ENCODE measurements at regions of chr18 and their contacts with region 1.

Region 1: DNA sequence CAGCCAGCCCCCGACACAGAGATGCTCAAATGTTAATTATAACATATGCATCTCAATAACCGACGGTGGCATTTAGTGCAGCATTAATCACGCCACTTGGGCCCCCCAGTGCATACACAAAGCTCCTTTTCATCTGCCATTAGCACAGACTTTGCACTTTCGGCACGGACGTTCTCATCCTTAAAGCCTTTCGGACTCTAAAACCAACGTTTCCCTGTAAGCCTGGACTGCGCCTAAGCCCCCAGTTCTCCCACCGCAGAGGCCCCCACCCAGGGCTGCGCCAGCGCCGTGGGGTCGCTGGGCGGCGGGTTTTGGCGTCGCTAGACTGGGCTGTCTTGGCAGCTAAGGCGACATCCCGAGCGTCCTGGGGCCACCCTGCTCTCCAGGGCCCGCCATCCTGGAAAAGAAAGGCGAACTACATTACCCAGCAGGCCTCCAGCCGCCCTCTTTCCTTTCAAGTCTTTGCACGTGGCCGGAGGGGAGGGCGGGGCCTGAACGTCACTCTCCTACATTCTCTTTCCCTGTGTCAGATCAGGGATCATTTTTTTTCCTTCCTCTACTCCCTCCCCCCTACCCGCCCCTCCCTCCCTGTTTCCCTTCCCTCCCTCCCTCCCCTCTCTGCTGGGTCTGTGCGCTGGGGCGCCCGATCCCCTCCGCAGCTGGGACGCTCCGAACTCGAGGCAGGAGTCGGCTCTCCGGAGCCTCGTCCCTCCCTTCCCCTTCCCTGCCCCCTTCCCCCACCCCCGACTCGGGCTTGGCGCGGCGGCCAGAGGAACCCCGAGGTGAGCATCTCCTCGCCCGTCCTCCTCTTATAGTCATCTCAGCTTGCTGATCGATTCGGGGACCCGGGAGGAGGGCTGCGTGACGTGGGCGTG is at the start of gene CTIF:
- DNase-seq: peak in 8 of 9 experiments; percentile 30 to 72 (median 57)
- ATAC-seq: peak; percentile 66
- H3K4me3 ChIP-seq: peak within 1 kb of the TSS; percentile 63 to 77
- H3K4me3 Mint-ChIP-seq: peak within 1 kb of the TSS; percentile 86
- H3K27ac ChIP-seq: no peak within 1 kb of the TSS
- H3K27ac Mint-ChIP-seq: no peak within 1 kb of the TSS
- H3K4me1 ChIP-seq: peaks cover 6% of the 10 kb centered on the region
- H3K4me1 Mint-ChIP-seq: peaks cover 10% of the 10 kb centered on the region
- H3K27me3 ChIP-seq: peaks cover 0 to 12% of the 10 kb centered on the region in 2 experiments
- H3K27me3 Mint-ChIP-seq: peaks cover 20% of the 10 kb centered on the region
- CTCF ChIP-seq: no peak
- total RNA-seq, gene CTIF: 2.0 to 3.0 TPM

Region 2: GRCh38 chr18:46920653-46921052 is 1618.1 kb before region 1 on chr18:
- CTCF ChIA-PET with region 1: no interaction called
- POLR2A ChIA-PET with region 1: no interaction called
- intact Hi-C with region 1: no loop called
- DNase-seq: no peak
- ATAC-seq: no peak
- H3K4me3 ChIP-seq: no peak overlapping the region
- H3K4me3 Mint-ChIP-seq: no peak overlapping the region
- H3K27ac ChIP-seq: no peak overlapping the region
- H3K27ac Mint-ChIP-seq: no peak overlapping the region
- H3K4me1 ChIP-seq: peaks cover 6% of the 10 kb centered on the region
- H3K4me1 Mint-ChIP-seq: peaks cover 24% of the 10 kb centered on the region
- H3K27me3 ChIP-seq: no peaks in the 10 kb centered on the region
- H3K27me3 Mint-ChIP-seq: no peaks in the 10 kb centered on the region
- CTCF ChIP-seq: no peak

Region 3: GRCh38 chr18:48172226-48173006 is 366.4 kb before region 1 on chr18:
- CTCF ChIA-PET with region 1: no interaction called
- POLR2A ChIA-PET with region 1: no interaction called
- intact Hi-C with region 1: loop called in 1 of 2 experiments (anchors 10 kb)
- DNase-seq: no peak
- ATAC-seq: no peak
- H3K4me3 ChIP-seq: no peak overlapping the region
- H3K4me3 Mint-ChIP-seq: no peak overlapping the region
- H3K27ac ChIP-seq: no peak overlapping the region
- H3K27ac Mint-ChIP-seq: no peak overlapping the region
- H3K4me1 ChIP-seq: no peaks in the 10 kb centered on the region
- H3K4me1 Mint-ChIP-seq: no peaks in the 10 kb centered on the region
- H3K27me3 ChIP-seq: peaks cover 0 to 2% of the 10 kb centered on the region in 2 experiments
- H3K27me3 Mint-ChIP-seq: peaks cover 5% of the 10 kb centered on the region
- CTCF ChIP-seq: no peak